ENCODE measurements at regions of chr11 and their contacts with region 1.

Region 1: GRCh38 chr11:27196203-27196897 is 155.7 kb downstream of the BBOX1 start:
- DNase-seq: no peak
- H3K4me3 ChIP-seq: no peak overlapping the region
- CTCF ChIP-seq: no peak

Region 2: DNA sequence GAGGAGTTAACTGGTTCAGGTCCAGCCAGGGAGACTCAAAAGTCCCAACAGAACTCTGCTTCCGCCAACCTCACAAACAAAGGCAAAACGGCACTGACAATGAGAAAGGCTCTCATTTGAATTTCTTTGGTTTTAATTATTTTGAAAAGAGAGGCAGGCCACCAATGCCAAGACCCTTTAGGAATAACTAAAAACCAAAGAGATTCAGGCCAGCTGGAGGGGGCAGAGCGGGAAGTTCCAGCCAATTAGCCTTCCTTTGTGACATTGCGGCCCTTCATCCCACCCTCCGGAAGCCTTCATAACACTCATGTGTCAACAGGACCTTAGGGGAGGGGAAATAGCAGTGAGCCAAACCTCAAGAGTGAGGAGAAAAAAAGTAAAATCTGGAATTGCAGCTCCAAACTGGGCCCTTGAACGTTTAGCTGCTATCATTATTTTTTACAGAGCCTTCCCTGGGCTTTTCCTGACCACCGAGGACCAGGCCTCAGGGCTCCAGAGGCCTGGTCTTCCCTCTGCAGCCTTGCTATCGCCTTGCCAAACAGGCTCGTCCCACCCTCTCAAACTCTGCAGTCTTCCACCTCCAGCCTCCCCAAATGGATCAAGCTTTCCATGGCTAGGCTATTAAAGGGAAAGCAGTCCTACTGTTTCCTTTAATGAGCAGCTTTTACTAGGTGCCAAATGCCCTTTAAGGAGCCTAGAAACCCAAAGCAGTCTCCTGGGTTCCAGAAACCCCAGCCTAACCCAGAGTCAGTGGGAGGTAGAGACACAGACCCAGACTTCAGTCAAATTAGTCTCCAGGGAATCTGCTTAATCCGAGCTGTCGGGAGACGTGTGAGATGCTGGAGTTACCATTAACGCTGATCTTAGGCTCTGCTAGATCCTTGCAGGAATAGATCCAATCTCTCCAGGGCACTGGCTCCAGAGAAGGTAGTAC is 52.5 kb after region 1 on chr11:
- in situ Hi-C with region 1: loop called (anchors 5 kb)
- DNase-seq: peak; percentile 41
- H3K4me3 ChIP-seq: no peak overlapping the region
- CTCF ChIP-seq: no peak

Region 3: DNA sequence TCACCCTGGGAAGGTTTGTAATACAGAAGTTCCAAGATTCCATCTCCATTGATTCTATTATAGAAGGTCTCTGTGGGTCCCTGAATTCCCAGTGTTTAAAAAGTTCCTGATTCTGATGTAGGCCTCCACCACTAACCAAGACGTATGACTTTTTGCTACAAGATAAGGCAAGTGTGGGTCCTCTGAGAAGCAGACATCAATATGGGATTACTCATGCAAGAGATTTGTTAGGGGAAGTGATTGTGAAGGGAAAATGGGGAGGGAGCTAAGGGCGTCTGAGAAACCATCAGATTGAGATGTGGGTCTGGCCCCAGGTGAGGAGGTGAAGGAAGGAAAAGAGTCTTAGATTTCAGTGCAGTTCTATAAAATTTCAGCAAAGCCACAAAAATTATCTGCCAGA is 286.4 kb after region 1 on chr11:
- in situ Hi-C with region 1: loop called (anchors 5 kb)
- DNase-seq: no peak
- H3K4me3 ChIP-seq: no peak overlapping the region
- CTCF ChIP-seq: no peak

Region 4: DNA sequence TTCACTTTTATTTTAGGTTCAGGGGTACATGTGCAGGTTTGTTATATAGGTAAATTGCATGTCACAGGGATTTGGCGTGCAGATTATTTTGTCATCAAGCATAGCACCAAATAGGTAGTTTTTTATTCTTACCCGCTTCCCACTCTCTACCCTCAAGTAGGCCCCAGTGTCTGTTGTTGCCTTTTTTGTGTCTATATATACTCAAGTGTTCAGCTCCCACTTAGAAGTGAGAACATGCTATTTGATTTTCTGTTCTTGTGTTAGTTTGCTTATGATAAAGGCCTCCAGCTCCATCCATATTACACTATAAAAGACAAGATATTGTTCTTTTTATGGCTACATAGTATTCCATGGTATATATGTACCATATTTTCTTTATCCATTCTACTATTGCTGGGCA is 338.8 kb after region 1 on chr11:
- in situ Hi-C with region 1: no loop called
- DNase-seq: no peak
- H3K4me3 ChIP-seq: no peak overlapping the region
- CTCF ChIP-seq: no peak